ENCODE measurements at regions of chr7 and their contacts with region 1.

Region 1: DNA sequence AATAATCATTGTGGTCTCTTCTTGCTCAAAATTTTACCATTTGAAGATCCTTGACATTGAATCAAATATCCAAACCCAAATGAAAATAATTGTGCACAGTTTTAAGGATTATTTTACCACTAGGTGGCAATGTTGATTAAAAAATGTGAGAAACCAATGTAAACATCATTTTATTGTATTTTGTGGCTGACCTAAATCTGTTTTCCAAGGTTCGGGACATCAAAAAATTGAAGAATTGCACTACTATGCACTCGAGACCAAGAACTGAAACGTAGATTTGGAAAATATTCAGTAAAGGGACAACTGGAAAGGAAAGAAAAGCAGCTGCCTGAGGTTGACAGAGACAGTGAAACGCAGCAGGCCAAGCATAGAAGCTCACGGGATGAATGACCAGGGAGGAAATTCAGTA is 259.3 kb downstream of the SNX13 start:
- DNase-seq: no peak
- H3K4me3 ChIP-seq: no peak overlapping the region
- CTCF ChIP-seq: no peak

Region 2: GRCh38 chr7:17640730-17641377 is 40.1 kb before region 1 on chr7:
- CTCF ChIA-PET with region 1: no interaction called
- POLR2A ChIA-PET with region 1: no interaction called
- DNase-seq: no peak
- H3K4me3 ChIP-seq: no peak overlapping the region
- CTCF ChIP-seq: peak; percentile 41

Region 3: DNA sequence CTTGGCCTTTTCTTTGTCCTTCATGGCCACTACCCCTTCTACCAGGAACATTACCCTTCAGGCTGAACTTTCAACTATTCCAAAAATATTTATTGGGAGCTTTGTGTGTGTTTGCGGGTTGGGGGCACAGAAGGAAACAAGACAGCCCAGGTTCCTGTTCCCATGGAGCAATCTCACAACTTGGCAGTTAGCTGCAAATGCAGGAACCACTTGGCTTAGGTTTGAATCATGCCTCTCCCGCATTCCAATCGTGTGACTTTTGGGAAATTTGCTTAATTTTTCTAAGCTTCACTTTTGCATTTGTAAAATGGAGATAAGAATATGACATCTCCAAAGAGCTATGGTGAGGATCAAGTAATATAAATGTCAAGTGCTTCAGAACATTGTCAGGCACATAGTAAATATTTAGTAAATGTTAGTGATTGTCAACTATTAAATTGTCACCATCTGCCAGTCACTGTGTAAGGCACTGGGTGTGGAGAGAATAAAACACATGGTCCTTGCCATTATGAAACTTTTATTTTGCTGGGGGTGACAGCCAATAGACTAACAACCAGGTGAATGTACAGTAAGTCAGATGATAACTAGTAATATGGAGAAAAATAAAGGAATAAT is 17.8 kb before region 1 on chr7:
- CTCF ChIA-PET with region 1: interaction called, 10 read pairs
- POLR2A ChIA-PET with region 1: no interaction called
- DNase-seq: no peak
- H3K4me3 ChIP-seq: no peak overlapping the region
- CTCF ChIP-seq: no peak

Region 4: DNA sequence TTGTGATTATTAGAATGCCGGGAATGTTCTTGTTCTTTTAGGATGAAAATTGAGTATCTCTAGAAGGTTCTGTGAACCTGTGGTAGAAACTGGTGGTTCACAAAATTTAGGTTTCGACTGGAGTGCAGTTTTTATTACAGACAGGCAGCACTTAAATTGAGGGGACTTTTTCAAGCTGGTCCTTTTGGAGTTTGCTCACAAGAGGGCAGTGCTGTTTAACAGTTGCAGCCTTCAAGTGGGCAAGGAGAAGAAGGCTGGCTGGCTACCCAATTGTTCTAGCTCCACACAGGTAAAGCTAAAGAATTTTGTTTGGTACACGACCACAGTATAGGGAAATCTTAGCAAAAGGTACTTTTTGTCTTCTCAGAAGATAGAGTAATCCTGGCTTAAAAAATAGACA is 25.8 kb after region 1 on chr7:
- CTCF ChIA-PET with region 1: interaction called, 16 read pairs
- POLR2A ChIA-PET with region 1: no interaction called
- DNase-seq: peak; percentile 16
- H3K4me3 ChIP-seq: no peak overlapping the region
- CTCF ChIP-seq: peak; percentile 69

Region 5: GRCh38 chr7:17830206-17830605 is 149.3 kb after region 1 on chr7:
- CTCF ChIA-PET with region 1: no interaction called
- POLR2A ChIA-PET with region 1: no interaction called
- DNase-seq: no peak
- H3K4me3 ChIP-seq: no peak overlapping the region
- CTCF ChIP-seq: no peak

Region 6: GRCh38 chr7:18320971-18321567 is 640.1 kb after region 1 on chr7:
- CTCF ChIA-PET with region 1: interaction called, 26 read pairs
- POLR2A ChIA-PET with region 1: no interaction called
- DNase-seq: peak; percentile 16
- H3K4me3 ChIP-seq: no peak overlapping the region
- CTCF ChIP-seq: peak; percentile 54